A673 (cell line): ENCODE measurements at regions of chr14 and their contacts with region 1.

Region 1: GRCh38 chr14:77659831-77660230 is 43.4 kb upstream of the SPTLC2 start:
- DNase-seq: no peak
- H3K4me3 ChIP-seq: no peak overlapping the region
- H3K27ac ChIP-seq: no peak overlapping the region
- H3K4me1 ChIP-seq: no peaks in the 10 kb centered on the region
- H3K27me3 ChIP-seq: no peaks in the 10 kb centered on the region
- CTCF ChIP-seq: no peak

Region 2: GRCh38 chr14:77622366-77622971 is 37.4 kb before region 1 on chr14:
- CTCF ChIA-PET with region 1: no interaction called
- POLR2A ChIA-PET with region 1: no interaction called
- intact Hi-C with region 1: no loop called
- DNase-seq: no peak
- H3K4me3 ChIP-seq: no peak overlapping the region
- H3K27ac ChIP-seq: no peak overlapping the region
- H3K4me1 ChIP-seq: no peaks in the 10 kb centered on the region
- H3K27me3 ChIP-seq: no peaks in the 10 kb centered on the region
- CTCF ChIP-seq: no peak

Region 3: GRCh38 chr14:78103271-78103670 is 443.4 kb after region 1 on chr14:
- CTCF ChIA-PET with region 1: no interaction called
- POLR2A ChIA-PET with region 1: no interaction called
- intact Hi-C with region 1: loop called (anchors 5 kb)
- DNase-seq: no peak
- H3K4me3 ChIP-seq: no peak overlapping the region
- H3K27ac ChIP-seq: no peak overlapping the region
- H3K4me1 ChIP-seq: no peaks in the 10 kb centered on the region
- H3K27me3 ChIP-seq: peaks cover 10% of the 10 kb centered on the region
- CTCF ChIP-seq: no peak

Region 4: GRCh38 chr14:78598041-78598920 is 938.5 kb after region 1 on chr14:
- CTCF ChIA-PET with region 1: no interaction called
- POLR2A ChIA-PET with region 1: no interaction called
- intact Hi-C with region 1: loop called (anchors 5 kb)
- DNase-seq: peak; percentile 69
- H3K4me3 ChIP-seq: no peak overlapping the region
- H3K27ac ChIP-seq: no peak overlapping the region
- H3K4me1 ChIP-seq: no peaks in the 10 kb centered on the region
- H3K27me3 ChIP-seq: peaks cover 14% of the 10 kb centered on the region
- CTCF ChIP-seq: peak; percentile 96